PC-9 (cell line): ENCODE measurements at regions of chr14 and their contacts with region 1.

Region 1: DNA sequence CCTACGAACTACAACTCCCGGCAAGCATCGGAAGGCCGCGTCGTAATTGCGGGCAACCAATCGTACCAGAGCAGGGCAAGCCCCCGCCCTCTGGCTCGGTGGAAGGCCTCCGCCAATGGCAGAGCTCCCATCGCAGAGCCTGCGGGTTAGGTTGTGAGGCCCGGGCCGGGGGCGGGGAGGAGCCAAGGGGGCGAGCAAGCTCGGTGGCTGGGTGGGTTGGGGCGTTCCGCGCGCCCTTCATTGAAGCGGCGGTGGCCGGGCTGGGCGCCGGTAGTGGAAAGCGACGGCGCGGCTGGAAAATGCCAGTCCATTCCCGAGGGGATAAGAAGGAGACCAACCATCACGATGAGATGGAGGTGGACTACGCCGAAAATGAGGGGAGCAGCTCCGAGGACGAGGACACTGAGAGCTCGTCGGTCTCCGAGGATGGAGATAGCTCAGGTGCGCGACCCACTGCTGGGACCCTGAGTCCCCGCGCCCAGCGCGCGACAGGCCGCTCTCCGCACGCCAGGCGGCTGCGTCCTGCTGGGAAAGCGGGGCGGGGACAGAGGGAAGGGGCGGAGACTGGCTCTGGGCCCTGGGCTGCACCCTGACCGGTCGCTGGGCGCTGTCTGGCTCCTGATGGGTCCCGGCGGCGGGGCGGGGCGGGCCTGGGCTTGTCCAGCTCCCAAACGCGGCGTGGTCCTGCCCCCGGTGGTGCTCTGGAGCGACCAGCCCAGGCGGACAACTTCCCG is at the start of gene BRMS1L:
- DNase-seq: peak; percentile 92 to 93
- H3K4me3 ChIP-seq: peak within 1 kb of the TSS; percentile 90
- H3K27ac ChIP-seq: peak within 1 kb of the TSS; percentile 84
- H3K4me1 ChIP-seq: peaks cover 8% of the 10 kb centered on the region
- H3K27me3 ChIP-seq: no peaks in the 10 kb centered on the region
- CTCF ChIP-seq: no peak
- total RNA-seq, gene BRMS1L: 5.7 and 8.0 TPM in 2 replicates

Region 2: GRCh38 chr14:35046048-35046741 is 780.2 kb before region 1 on chr14 and contains the start of gene FAM177A1:
- CTCF ChIA-PET with region 1: no interaction called
- POLR2A ChIA-PET with region 1: no interaction called
- intact Hi-C with region 1: loop called (anchors 5 kb)
- DNase-seq: peak; percentile 87 to 95
- H3K4me3 ChIP-seq: peak within 1 kb of the TSS; percentile 87
- H3K27ac ChIP-seq: peak within 1 kb of the TSS; percentile 76
- H3K4me1 ChIP-seq: peaks cover 23% of the 10 kb centered on the region
- H3K27me3 ChIP-seq: no peaks in the 10 kb centered on the region
- CTCF ChIP-seq: no peak
- total RNA-seq, gene FAM177A1: 31.6 and 34.4 TPM in 2 replicates

Region 3: GRCh38 chr14:35617500-35617899 is 208.9 kb before region 1 on chr14:
- CTCF ChIA-PET with region 1: no interaction called
- POLR2A ChIA-PET with region 1: interaction called, 10 read pairs
- intact Hi-C with region 1: no loop called
- DNase-seq: no peak
- H3K4me3 ChIP-seq: no peak overlapping the region
- H3K27ac ChIP-seq: no peak overlapping the region
- H3K4me1 ChIP-seq: no peaks in the 10 kb centered on the region
- H3K27me3 ChIP-seq: no peaks in the 10 kb centered on the region
- CTCF ChIP-seq: no peak

Region 4: DNA sequence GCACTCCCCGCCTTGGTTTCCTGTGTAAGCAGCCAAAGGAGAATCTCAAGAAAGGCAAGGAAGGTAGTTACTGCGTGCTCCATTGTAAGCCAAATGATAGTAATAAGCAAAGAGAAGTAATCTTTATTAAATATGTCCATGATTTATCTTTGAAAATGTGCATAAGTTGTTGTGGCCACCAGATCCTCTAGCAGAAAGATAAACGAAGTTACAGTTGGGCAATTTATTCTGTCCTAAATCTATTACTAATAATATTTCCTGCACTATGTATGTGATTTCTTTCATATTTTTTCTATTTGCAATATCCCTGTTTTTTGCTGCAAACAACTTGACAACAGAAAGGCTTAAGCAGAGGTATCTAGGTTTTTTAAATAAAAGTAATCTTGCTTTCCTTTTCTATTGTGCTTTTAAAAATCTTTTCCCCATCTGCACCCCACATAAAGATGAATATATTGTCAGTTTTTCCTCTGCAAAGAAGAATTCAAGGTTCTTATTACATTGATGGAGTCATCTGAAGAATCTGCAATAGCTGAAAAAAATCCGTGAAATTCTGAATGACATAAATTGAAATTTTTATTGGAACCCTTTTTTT is 16.9 kb before region 1 on chr14:
- CTCF ChIA-PET with region 1: interaction called, 3 read pairs
- POLR2A ChIA-PET with region 1: interaction called, 7 read pairs
- intact Hi-C with region 1: loop called (anchors 1 kb)
- DNase-seq: no peak
- H3K4me3 ChIP-seq: peak overlapping the region; percentile 81; the same call in 1 of the 2 replicates
- H3K27ac ChIP-seq: no peak overlapping the region
- H3K4me1 ChIP-seq: peaks cover 9% of the 10 kb centered on the region; the same call in 1 of the 2 replicates
- H3K27me3 ChIP-seq: no peaks in the 10 kb centered on the region
- CTCF ChIP-seq: no peak

Region 5: DNA sequence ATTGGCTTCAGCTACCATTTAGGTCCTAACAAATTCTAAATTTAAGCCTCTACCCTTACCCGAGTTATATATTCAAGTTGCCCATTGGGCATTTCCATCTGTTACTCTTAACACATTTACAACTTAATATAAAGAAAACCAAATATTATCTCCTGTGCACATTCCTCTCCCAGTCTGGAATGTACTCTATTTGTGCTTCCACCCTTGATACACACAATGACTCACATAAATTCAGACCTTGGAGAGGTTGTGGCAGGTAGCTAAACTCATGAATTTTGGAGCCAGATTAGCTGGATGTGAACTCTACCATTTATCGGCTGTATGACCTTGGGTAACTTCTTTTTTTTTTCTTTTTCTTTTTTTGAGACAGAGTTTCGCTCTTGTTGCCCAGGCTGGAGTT is 50.9 kb after region 1 on chr14:
- CTCF ChIA-PET with region 1: no interaction called
- POLR2A ChIA-PET with region 1: no interaction called
- intact Hi-C with region 1: loop called (anchors 1 kb)
- DNase-seq: peak in 1 of 2 experiments; percentile 74
- H3K4me3 ChIP-seq: no peak overlapping the region
- H3K27ac ChIP-seq: no peak overlapping the region
- H3K4me1 ChIP-seq: peaks cover 29% of the 10 kb centered on the region
- H3K27me3 ChIP-seq: no peaks in the 10 kb centered on the region
- CTCF ChIP-seq: no peak

Region 6: DNA sequence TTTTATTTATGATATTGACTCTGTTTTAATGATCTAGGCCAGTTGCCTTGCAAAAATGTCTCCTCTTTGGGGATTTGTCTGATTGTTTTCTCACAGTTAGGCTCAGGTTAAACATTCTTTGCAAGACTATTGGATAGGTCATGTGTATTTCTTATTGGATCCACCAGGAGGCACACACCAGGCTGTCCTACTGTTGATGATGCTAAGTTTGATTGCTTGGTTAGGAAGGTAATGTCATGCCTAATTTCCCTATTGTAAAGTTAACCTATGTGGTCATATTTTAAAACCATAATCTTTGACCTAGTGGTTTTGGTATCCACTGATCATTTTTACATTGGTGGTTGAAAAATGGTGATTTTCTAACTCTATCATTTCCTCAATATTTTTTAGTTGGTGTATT is 136.8 kb after region 1 on chr14:
- CTCF ChIA-PET with region 1: no interaction called
- POLR2A ChIA-PET with region 1: no interaction called
- intact Hi-C with region 1: no loop called
- DNase-seq: no peak
- H3K4me3 ChIP-seq: no peak overlapping the region
- H3K27ac ChIP-seq: no peak overlapping the region
- H3K4me1 ChIP-seq: no peaks in the 10 kb centered on the region
- H3K27me3 ChIP-seq: no peaks in the 10 kb centered on the region
- CTCF ChIP-seq: peak; percentile 32; the same call in 1 of the 2 replicates